Mammary epithelial cell (primary cell): ENCODE measurements at regions of chr2 and their contacts with region 1.

Region 1: GRCh38 chr2:199459286-199460016 is 1.7 kb upstream of the SATB2 start:
- DNase-seq: peak; percentile 93
- H3K4me3 ChIP-seq: peak overlapping the region; percentile 62 to 87 (median 78)
- H3K27ac ChIP-seq: peak overlapping the region; percentile 24
- H3K4me1 ChIP-seq: peaks cover 32% of the 10 kb centered on the region
- H3K27me3 ChIP-seq: peaks cover 44% of the 10 kb centered on the region
- CTCF ChIP-seq: no peak

Region 2: DNA sequence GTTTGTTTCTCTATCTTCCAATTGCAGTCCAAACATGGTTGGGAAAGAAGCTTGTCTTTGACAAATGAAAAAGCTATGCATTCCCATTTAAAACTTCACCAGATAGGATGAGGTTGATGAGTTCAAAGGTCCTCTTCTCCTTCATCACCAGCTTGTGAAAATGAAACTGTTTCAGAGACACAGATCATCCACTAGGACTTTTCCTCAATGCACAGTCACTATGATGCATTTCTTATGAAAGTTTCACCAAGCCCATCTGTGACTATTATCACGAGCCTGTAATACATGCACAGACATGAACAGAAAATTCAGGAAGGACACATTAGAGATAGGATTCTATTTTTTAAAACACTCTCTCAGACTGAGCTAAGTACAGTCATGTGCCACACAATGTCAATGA is 1010.7 kb before region 1 on chr2:
- CTCF ChIA-PET with region 1: no interaction called
- dilution Hi-C with region 1: no loop called
- in situ Hi-C with region 1: no loop called
- intact Hi-C with region 1: loop called (anchors 5 kb)
- DNase-seq: peak; percentile 80
- H3K4me3 ChIP-seq: no peak overlapping the region
- H3K27ac ChIP-seq: peak overlapping the region; percentile 87
- H3K4me1 ChIP-seq: peaks cover 11% of the 10 kb centered on the region
- H3K27me3 ChIP-seq: no peaks in the 10 kb centered on the region
- CTCF ChIP-seq: no peak

Region 3: GRCh38 chr2:199223791-199224190 is 235.7 kb before region 1 on chr2:
- CTCF ChIA-PET with region 1: no interaction called
- dilution Hi-C with region 1: no loop called
- in situ Hi-C with region 1: no loop called
- intact Hi-C with region 1: loop called (anchors 5 kb)
- DNase-seq: peak; percentile 94
- H3K4me3 ChIP-seq: no peak overlapping the region
- H3K27ac ChIP-seq: no peak overlapping the region
- H3K4me1 ChIP-seq: peaks cover 9% of the 10 kb centered on the region
- H3K27me3 ChIP-seq: peaks cover 3% of the 10 kb centered on the region
- CTCF ChIP-seq: no peak

Region 4: GRCh38 chr2:199405241-199405640 is 54.2 kb before region 1 on chr2:
- CTCF ChIA-PET with region 1: no interaction called
- dilution Hi-C with region 1: no loop called
- in situ Hi-C with region 1: no loop called
- intact Hi-C with region 1: loop called (anchors 2 kb)
- DNase-seq: no peak
- H3K4me3 ChIP-seq: no peak overlapping the region
- H3K27ac ChIP-seq: peak overlapping the region; percentile 29
- H3K4me1 ChIP-seq: no peaks in the 10 kb centered on the region
- H3K27me3 ChIP-seq: no peaks in the 10 kb centered on the region
- CTCF ChIP-seq: peak in 1 of 2 donors; percentile 18